Activated T-helper 1 cell treated with anti-CD3 and anti-CD28 coated beads, Interleukin-12 subunit alpha, Interleukin-12 subunit beta, Interleukin-2, Interleukin-4 antibody, amounts not matched to agents 30 ng/mL and 10 ng/mL and 1 ng/mL, durations not matched to agents 14 hours and 24 hours and 36 hours (primary cell): ENCODE measurements at regions of chrX and their contacts with region 1.

Region 1: DNA sequence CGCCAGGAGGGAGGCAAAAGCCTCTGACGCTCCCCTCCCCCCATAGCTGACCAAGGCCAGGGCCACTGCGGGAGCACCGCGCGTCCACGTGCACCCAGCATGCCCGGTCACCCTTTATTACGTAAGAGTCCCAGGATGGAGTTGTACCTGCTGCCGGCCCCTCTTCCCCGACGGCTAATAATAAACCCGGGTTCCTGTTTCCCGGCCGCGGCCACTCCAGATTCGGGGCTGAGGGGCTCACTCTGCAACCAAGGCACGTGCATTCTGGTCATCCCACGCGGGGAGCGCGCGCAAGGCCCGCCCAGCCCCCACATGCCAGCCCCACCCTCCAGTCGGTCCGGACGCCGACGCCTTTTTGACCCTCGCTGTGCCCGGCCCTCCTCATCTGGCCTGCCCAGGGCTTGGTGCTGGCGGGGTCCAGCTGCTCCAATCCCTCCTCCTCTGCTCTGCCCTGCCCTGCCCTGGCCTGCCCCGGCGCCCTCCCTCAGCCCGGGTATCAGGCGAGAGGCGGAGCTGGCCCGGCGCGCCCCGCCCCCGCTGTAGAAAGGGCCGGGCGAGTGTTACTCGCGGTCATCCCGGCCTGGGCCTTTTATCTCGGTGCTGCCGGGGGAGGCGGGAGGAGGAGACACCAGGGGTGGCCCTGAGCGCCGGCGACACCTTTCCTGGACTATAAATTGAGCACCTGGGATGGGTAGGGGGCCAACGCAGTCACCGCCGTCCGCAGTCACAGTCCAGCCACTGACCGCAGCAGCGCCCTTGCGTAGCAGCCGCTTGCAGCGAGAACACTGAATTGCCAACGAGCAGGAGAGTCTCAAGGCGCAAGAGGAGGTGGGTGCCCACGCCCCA is 2.5 kb downstream of the MID1IP1 start:
- DNase-seq: peak; percentile 69
- H3K4me3 Mint-ChIP-seq: peak overlapping the region; percentile 89
- H3K27ac Mint-ChIP-seq: peak overlapping the region; percentile 91
- H3K4me1 Mint-ChIP-seq: peaks cover 15% of the 10 kb centered on the region
- H3K27me3 Mint-ChIP-seq: no peaks in the 10 kb centered on the region

Region 2: GRCh38 chrX:37745354-37745753 is 1058.5 kb before region 1 on chrX:
- intact Hi-C with region 1: loop called (anchors 10 kb)
- DNase-seq: peak; percentile 47
- H3K4me3 Mint-ChIP-seq: no peak overlapping the region
- H3K27ac Mint-ChIP-seq: peak overlapping the region; percentile 78
- H3K4me1 Mint-ChIP-seq: peaks cover 26% of the 10 kb centered on the region
- H3K27me3 Mint-ChIP-seq: peaks cover 12% of the 10 kb centered on the region

Region 3: DNA sequence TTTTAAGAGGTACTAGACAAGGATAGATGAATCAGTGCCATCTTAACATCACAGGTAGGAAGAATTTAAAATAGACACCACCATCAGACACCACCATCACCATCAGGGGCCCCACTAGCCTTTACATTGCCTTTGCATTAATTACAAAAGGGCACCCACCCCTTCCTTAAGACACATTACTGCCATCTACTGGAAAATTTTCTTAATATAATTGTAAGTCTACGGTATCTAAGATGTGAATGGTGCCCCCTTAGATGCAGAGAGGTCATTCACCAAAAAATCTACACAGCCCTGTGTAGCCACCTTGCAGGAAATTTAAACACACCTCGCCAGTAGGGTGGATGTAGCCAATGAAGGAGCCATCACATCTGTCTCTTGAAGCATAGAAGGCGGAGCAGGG is 181.6 kb after region 1 on chrX:
- intact Hi-C with region 1: loop called (anchors 1 kb)
- DNase-seq: no peak
- H3K4me3 Mint-ChIP-seq: no peak overlapping the region
- H3K27ac Mint-ChIP-seq: no peak overlapping the region
- H3K4me1 Mint-ChIP-seq: no peaks in the 10 kb centered on the region
- H3K27me3 Mint-ChIP-seq: peaks cover 2% of the 10 kb centered on the region

Region 4: DNA sequence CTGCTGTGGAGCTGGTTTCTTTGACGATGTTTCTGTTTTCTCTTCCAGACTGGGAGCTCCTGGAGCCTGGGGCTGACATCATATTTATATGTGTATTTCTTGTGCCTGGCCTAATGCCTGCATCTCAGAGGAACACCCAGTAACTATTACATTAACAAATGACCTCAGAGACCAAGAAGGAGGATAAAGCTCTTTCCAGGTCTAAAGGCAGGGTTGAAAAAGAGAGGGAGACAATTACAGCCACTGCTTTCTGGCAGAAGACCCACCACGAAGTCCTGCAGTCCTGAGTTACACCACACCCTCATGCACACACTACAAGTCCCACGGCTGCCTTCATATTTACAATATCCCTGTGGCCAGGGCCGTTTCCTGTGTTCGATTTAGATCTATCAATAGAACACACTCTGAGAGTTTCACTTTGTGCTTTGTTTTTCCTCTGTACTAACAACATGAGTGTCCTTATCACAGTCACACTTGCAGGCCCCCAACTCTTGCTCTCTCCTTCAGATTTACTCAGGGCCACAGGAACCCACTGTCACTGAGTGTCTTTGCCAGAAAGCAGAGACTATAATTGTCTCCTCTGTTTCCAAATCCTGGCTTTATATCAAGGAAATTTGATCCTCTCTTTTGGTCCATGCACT is 533.0 kb after region 1 on chrX:
- intact Hi-C with region 1: loop called (anchors 10 kb)
- DNase-seq: peak; percentile 2
- H3K4me3 Mint-ChIP-seq: peak overlapping the region; percentile 51
- H3K27ac Mint-ChIP-seq: peak overlapping the region; percentile 86
- H3K4me1 Mint-ChIP-seq: peaks cover 34% of the 10 kb centered on the region
- H3K27me3 Mint-ChIP-seq: no peaks in the 10 kb centered on the region

Region 5: GRCh38 chrX:40108959-40109287 is 1305.1 kb after region 1 on chrX:
- intact Hi-C with region 1: loop called (anchors 5 kb)
- DNase-seq: peak; percentile 30
- H3K4me3 Mint-ChIP-seq: no peak overlapping the region
- H3K27ac Mint-ChIP-seq: no peak overlapping the region
- H3K4me1 Mint-ChIP-seq: peaks cover 6% of the 10 kb centered on the region
- H3K27me3 Mint-ChIP-seq: peaks cover 3% of the 10 kb centered on the region